A549 (cell line): ENCODE measurements at regions of chr17 and their contacts with region 1.

Region 1: DNA sequence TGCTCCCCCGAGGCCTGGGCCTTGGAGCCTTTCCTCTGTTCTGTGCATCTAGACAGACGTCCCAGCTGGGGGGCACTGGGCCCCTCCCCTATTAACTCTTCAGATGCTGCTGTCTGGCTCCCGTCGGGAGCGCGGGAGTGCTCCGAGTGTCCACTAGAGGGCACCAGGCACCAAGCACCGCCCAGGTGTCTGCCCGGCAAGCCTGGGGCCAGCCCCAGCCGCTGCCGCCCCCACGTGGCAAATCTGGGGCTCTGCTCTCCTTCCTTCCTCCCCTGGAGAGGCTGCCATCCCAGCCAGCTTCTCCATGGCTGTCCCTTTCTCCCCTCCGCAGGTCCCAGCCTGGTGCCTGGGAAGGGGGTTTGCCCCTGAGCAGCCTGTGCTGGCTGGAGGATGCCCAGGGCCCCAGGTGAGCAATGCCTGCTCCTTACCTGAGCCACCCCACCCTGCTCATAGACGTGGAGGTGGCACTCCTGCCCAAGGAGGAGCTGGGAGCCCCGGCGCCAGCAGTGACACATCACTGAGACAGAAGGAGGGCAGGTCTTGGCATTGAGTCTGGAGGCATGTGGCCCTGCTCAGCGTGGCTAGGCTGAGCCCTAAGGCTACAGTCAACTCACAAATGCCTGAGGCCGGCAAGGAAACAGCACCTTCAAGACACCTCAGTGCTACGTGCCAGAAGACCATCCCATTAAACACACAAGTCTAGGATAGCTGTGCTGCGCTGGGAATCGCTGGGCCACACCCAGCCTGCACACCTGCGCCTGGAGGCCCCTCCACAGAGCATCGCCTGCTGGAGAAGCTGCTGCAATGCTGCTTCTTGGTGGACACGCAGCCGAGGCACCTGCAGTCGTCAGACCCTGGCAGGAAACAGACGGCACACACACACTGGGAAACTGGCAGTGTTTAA is 19.7 kb downstream of the TMEM235 start:
- DNase-seq: peak; percentile 90 to 98
- ATAC-seq: peak; percentile 81 to 90
- H3K4me3 ChIP-seq: no peak overlapping the region
- H3K27ac ChIP-seq: peak overlapping the region; percentile 52 to 73; a peak in 5 of 6 replicates
- H3K4me1 ChIP-seq: peaks cover 10% of the 10 kb centered on the region
- CTCF ChIP-seq: peak; percentile 100
- EP300 ChIP-seq: no peak
- POLR2A ChIP-seq: no peak
- RAD21 ChIP-seq: peak; percentile 98

Region 2: GRCh38 chr17:77609553-77610517 is 641.3 kb before region 1 on chr17:
- CTCF ChIA-PET with region 1: no interaction called
- POLR2A ChIA-PET with region 1: no interaction called
- DNase-seq: no peak
- ATAC-seq: no peak
- H3K4me3 ChIP-seq: no peak overlapping the region
- H3K27ac ChIP-seq: peak overlapping the region in 1 of 2 experiments; percentile 11; a peak in 1 of 6 replicates
- H3K4me1 ChIP-seq: peaks cover 3% of the 10 kb centered on the region
- CTCF ChIP-seq: no peak
- EP300 ChIP-seq: no peak
- POLR2A ChIP-seq: no peak
- RAD21 ChIP-seq: no peak

Region 3: DNA sequence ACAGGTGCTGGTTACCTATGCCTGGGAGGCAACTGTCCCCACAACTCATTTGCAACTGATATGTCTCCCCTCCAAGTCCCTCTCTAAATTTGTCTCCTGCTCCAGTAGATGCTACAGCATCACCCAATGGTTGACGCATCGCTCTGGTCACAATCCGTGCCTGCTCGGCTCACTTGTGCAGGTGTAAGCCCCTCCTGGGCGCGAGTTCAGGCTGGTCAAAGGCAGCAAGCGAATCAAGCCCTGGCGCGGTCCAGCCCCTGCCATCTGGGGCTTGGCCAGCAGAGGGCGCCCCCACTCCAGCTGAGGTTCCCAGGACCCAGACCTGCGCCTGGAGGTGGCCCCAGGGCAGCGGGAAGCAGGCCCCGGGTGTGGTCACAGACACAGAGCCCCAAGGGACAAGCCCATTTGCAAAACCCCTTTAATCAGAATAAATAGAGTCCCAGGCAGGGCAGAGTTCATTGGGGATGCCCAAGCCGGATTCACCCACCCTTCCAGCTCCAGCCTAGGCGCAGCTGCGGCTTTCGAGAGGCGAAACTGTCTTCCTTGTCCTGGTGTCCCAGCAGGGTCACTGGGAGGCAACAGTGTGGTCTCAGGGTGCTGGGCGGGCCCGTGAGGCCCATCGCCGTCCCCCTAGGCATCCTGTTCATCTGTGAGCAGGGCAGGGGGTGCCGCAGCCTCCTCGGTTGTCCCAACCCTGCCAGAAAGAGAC is 138.5 kb before region 1 on chr17:
- CTCF ChIA-PET with region 1: interaction called, 104 read pairs
- POLR2A ChIA-PET with region 1: no interaction called
- DNase-seq: peak; percentile 73 to 96
- ATAC-seq: peak; percentile 78 to 92
- H3K4me3 ChIP-seq: no peak overlapping the region
- H3K27ac ChIP-seq: peak overlapping the region in 1 of 2 experiments; percentile 3; a peak in 1 of 6 replicates
- H3K4me1 ChIP-seq: no peaks in the 10 kb centered on the region
- CTCF ChIP-seq: peak; percentile 97
- EP300 ChIP-seq: no peak
- POLR2A ChIP-seq: no peak
- RAD21 ChIP-seq: peak; percentile 98

Region 4: GRCh38 chr17:78206298-78206697 is 44.8 kb before region 1 on chr17:
- CTCF ChIA-PET with region 1: interaction called, 20 read pairs
- POLR2A ChIA-PET with region 1: no interaction called
- DNase-seq: no peak
- ATAC-seq: peak; percentile 66 to 67; a peak in 4 of 6 replicates
- H3K4me3 ChIP-seq: no peak overlapping the region
- H3K27ac ChIP-seq: no peak overlapping the region
- H3K4me1 ChIP-seq: no peaks in the 10 kb centered on the region
- CTCF ChIP-seq: 0 out of 3 replicates have a peak, but pooled peaks have one; percentile 6
- EP300 ChIP-seq: no peak
- POLR2A ChIP-seq: no peak
- RAD21 ChIP-seq: peak in 1 of 2 experiments; percentile 18; a peak in 1 of 5 replicates

Region 5: GRCh38 chr17:78281249-78281845 is 30.2 kb after region 1 on chr17:
- CTCF ChIA-PET with region 1: interaction called, 18 read pairs
- POLR2A ChIA-PET with region 1: no interaction called
- DNase-seq: no peak
- ATAC-seq: peak in 1 of 2 experiments; percentile 18; a peak in 3 of 6 replicates
- H3K4me3 ChIP-seq: no peak overlapping the region
- H3K27ac ChIP-seq: peak overlapping the region in 1 of 2 experiments; percentile 66; a peak in 3 of 6 replicates
- H3K4me1 ChIP-seq: peaks cover 13% of the 10 kb centered on the region; the same call in 1 of the 3 replicates
- CTCF ChIP-seq: no peak
- EP300 ChIP-seq: no peak
- POLR2A ChIP-seq: no peak
- RAD21 ChIP-seq: no peak

Region 6: GRCh38 chr17:78335209-78335608 is 84.1 kb after region 1 on chr17:
- CTCF ChIA-PET with region 1: interaction called, 12 read pairs
- POLR2A ChIA-PET with region 1: no interaction called
- DNase-seq: no peak
- ATAC-seq: no peak; a peak in 1 of 6 replicates
- H3K4me3 ChIP-seq: no peak overlapping the region; the same call in 2 of the 3 replicates
- H3K27ac ChIP-seq: peak overlapping the region; percentile 76 to 97
- H3K4me1 ChIP-seq: peaks cover 86% of the 10 kb centered on the region
- CTCF ChIP-seq: no peak
- EP300 ChIP-seq: no peak
- POLR2A ChIP-seq: no peak
- RAD21 ChIP-seq: no peak

Region 7: DNA sequence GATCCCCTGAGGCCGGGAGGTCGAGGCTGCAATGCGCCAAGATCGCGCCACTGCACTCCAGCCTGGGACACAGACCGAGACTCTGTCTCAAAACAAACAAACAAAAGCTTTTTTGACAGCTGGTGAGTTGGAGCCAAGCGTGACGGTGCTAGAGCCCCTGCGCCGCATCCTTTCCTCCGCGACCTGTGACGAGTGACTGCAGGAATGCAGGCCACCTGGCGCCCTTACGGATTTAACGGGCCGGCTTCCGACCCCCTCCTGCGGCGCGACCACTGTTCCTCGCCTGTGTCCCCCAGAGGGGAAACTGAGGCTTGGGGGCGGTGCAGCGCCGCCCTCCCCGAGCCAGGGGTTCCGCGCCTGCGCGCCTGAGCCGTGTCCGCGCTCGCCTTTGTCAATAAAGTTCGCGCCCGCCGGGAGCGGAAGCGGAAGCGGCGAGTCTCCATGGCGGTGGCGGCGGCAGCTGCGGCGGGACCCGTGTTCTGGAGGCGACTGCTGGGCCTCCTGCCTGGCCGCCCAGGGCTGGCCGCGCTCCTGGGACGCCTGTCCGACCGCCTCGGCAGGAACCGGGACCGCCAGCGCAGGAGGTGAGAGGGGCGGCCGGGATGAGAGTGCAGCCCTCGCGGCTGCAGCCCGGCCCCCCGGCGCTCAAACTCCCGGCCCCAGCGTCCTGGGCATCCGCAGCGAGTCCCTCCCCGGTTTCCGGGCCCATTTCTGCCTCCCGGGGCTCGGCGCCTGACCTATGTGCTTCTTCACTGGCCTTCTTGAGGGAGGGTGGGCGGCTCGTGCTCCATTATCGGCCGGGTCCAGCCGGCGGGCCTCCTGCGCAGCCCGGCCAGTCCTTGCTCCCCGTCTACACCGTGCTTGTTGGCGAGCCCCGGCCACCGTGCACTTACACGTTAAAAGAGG is 127.3 kb after region 1 on chr17 and contains the start of gene PGS1:
- CTCF ChIA-PET with region 1: interaction called, 28 read pairs
- POLR2A ChIA-PET with region 1: no interaction called
- DNase-seq: peak; percentile 76 to 81
- ATAC-seq: peak; percentile 78 to 85
- H3K4me3 ChIP-seq: peak within 1 kb of the TSS; percentile 91
- H3K27ac ChIP-seq: peak within 1 kb of the TSS; percentile 88 to 90
- H3K4me1 ChIP-seq: peaks cover 52% of the 10 kb centered on the region
- CTCF ChIP-seq: no peak
- EP300 ChIP-seq: no peak
- POLR2A ChIP-seq: peak; percentile 91
- RAD21 ChIP-seq: no peak; a peak in 1 of 5 replicates
- polyA plus RNA-seq, gene PGS1: 29.5 and 29.6 TPM in 2 replicates